Mammary epithelial cell (primary cell): ENCODE measurements at regions of chr5 and their contacts with region 1.

Region 1: DNA sequence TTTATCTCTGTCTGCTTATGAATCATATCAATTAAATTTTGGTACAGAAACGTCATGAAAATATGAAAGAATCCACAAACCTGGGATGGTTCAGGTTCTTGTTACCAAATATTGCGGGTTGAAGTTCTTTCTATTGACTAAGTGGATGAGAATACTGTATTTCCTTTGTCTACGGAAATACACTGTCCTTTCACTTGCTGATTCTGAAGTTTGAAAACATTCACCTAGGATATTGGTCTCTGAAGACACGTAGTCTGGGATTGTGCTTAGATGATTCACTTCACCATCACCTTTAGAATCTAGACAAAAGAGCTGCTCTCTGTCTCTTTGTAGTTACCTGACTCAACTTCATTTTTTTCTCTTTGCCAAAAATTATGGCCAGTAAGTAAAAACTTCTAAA is 222.4 kb downstream of the FBN2 start:
- DNase-seq: peak; percentile 78
- H3K4me3 ChIP-seq: no peak overlapping the region
- H3K27ac ChIP-seq: no peak overlapping the region
- H3K4me1 ChIP-seq: peaks cover 8% of the 10 kb centered on the region
- H3K27me3 ChIP-seq: no peaks in the 10 kb centered on the region
- CTCF ChIP-seq: no peak

Region 2: DNA sequence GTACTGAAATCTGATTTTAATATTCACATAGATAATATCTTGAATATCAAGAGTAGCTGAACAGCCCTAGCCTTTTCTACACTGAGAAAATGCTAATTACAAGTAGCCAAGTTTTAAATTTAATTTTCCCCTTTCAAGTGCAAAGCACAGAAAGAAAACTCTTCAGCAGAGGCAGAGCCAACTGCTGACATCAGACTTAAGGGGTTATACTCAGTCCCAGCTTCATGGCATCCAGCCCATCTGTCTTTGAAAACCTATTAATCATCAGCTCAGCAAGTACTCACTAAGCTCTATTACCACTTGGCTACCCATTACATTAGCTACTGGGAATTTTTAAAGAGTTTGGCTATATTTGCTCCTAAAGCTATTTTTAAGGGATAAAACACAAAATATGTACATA is 11.6 kb before region 1 on chr5:
- CTCF ChIA-PET with region 1: interaction called, 13 read pairs
- dilution Hi-C with region 1: no loop called
- in situ Hi-C with region 1: no loop called
- intact Hi-C with region 1: no loop called
- DNase-seq: peak; percentile 54
- H3K4me3 ChIP-seq: no peak overlapping the region
- H3K27ac ChIP-seq: no peak overlapping the region
- H3K4me1 ChIP-seq: no peaks in the 10 kb centered on the region
- H3K27me3 ChIP-seq: no peaks in the 10 kb centered on the region
- CTCF ChIP-seq: no peak